Activated CD8-positive, alpha-beta T cell treated with anti-CD3 and anti-CD28 coated beads for 36 hours (primary cell): ENCODE measurements at regions of chr1 and their contacts with region 1.

Region 1: GRCh38 chr1:94843430-94843829 is 23.3 kb downstream of the SLC44A3 start:
- DNase-seq: peak; percentile 5
- ATAC-seq: no peak
- H3K4me3 Mint-ChIP-seq: no peak overlapping the region
- H3K27ac Mint-ChIP-seq: no peak overlapping the region
- H3K4me1 Mint-ChIP-seq: no peaks in the 10 kb centered on the region
- H3K27me3 Mint-ChIP-seq: peaks cover 2% of the 10 kb centered on the region
- CTCF ChIP-seq: no peak

Region 2: GRCh38 chr1:94871031-94871430 is 27.6 kb after region 1 on chr1:
- CTCF ChIA-PET with region 1: no interaction called
- POLR2A ChIA-PET with region 1: no interaction called
- intact Hi-C with region 1: loop called (anchors 2 kb)
- DNase-seq: no peak
- ATAC-seq: no peak
- H3K4me3 Mint-ChIP-seq: no peak overlapping the region
- H3K27ac Mint-ChIP-seq: no peak overlapping the region
- H3K4me1 Mint-ChIP-seq: peaks cover 7% of the 10 kb centered on the region
- H3K27me3 Mint-ChIP-seq: no peaks in the 10 kb centered on the region
- CTCF ChIP-seq: no peak